ENCODE measurements at regions of chr5 and their contacts with region 1.

Region 1: GRCh38 chr5:98354922-98355321 is 418.5 kb upstream of the RGMB start:
- DNase-seq: no peak
- ATAC-seq: no peak
- H3K4me3 ChIP-seq: no peak overlapping the region
- H3K4me3 Mint-ChIP-seq: no peak overlapping the region
- H3K27ac ChIP-seq: no peak overlapping the region
- H3K27ac Mint-ChIP-seq: no peak overlapping the region
- H3K4me1 ChIP-seq: no peaks in the 10 kb centered on the region
- H3K4me1 Mint-ChIP-seq: no peaks in the 10 kb centered on the region
- H3K27me3 ChIP-seq: no peaks in the 10 kb centered on the region
- H3K27me3 Mint-ChIP-seq: no peaks in the 10 kb centered on the region
- CTCF ChIP-seq: no peak

Region 2: DNA sequence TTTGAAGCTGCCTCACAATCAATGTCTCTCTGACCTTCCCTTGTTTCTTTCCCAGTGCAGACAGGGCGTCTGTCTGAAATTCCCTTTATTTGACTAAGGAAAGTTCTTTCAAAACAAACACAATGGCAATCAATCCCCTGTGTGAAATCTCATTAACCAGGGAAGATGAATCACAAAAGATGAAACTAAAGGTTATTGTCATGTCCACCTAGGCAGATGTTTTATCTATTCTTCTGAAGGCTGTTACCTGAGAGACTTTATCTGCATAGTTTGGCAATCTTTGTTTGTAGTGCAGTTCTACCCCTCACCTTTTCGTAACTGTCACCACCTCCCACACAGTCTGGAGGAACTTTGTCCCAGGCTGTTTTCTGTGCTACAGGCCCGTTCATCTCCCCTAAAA is 954.4 kb before region 1 on chr5:
- CTCF ChIA-PET with region 1: no interaction called
- POLR2A ChIA-PET with region 1: no interaction called
- intact Hi-C with region 1: no loop called
- DNase-seq: no peak
- ATAC-seq: no peak
- H3K4me3 ChIP-seq: no peak overlapping the region
- H3K4me3 Mint-ChIP-seq: no peak overlapping the region
- H3K27ac ChIP-seq: no peak overlapping the region
- H3K27ac Mint-ChIP-seq: no peak overlapping the region
- H3K4me1 ChIP-seq: no peaks in the 10 kb centered on the region
- H3K4me1 Mint-ChIP-seq: no peaks in the 10 kb centered on the region
- H3K27me3 ChIP-seq: no peaks in the 10 kb centered on the region
- H3K27me3 Mint-ChIP-seq: no peaks in the 10 kb centered on the region
- CTCF ChIP-seq: no peak

Region 3: GRCh38 chr5:98248949-98249348 is 106.0 kb before region 1 on chr5:
- CTCF ChIA-PET with region 1: no interaction called
- POLR2A ChIA-PET with region 1: no interaction called
- intact Hi-C with region 1: loop called in 1 of 2 experiments (anchors 5 kb)
- DNase-seq: no peak
- ATAC-seq: no peak
- H3K4me3 ChIP-seq: no peak overlapping the region
- H3K4me3 Mint-ChIP-seq: no peak overlapping the region
- H3K27ac ChIP-seq: no peak overlapping the region
- H3K27ac Mint-ChIP-seq: no peak overlapping the region
- H3K4me1 ChIP-seq: no peaks in the 10 kb centered on the region
- H3K4me1 Mint-ChIP-seq: no peaks in the 10 kb centered on the region
- H3K27me3 ChIP-seq: no peaks in the 10 kb centered on the region
- H3K27me3 Mint-ChIP-seq: no peaks in the 10 kb centered on the region
- CTCF ChIP-seq: no peak

Region 4: GRCh38 chr5:98390169-98390568 is 35.2 kb after region 1 on chr5:
- CTCF ChIA-PET with region 1: no interaction called
- POLR2A ChIA-PET with region 1: no interaction called
- intact Hi-C with region 1: no loop called
- DNase-seq: no peak
- ATAC-seq: no peak
- H3K4me3 ChIP-seq: no peak overlapping the region
- H3K4me3 Mint-ChIP-seq: no peak overlapping the region
- H3K27ac ChIP-seq: no peak overlapping the region
- H3K27ac Mint-ChIP-seq: no peak overlapping the region
- H3K4me1 ChIP-seq: no peaks in the 10 kb centered on the region
- H3K4me1 Mint-ChIP-seq: no peaks in the 10 kb centered on the region
- H3K27me3 ChIP-seq: no peaks in the 10 kb centered on the region
- H3K27me3 Mint-ChIP-seq: no peaks in the 10 kb centered on the region
- CTCF ChIP-seq: no peak